ENCODE measurements at regions of chr18 and their contacts with region 1.

Region 1: DNA sequence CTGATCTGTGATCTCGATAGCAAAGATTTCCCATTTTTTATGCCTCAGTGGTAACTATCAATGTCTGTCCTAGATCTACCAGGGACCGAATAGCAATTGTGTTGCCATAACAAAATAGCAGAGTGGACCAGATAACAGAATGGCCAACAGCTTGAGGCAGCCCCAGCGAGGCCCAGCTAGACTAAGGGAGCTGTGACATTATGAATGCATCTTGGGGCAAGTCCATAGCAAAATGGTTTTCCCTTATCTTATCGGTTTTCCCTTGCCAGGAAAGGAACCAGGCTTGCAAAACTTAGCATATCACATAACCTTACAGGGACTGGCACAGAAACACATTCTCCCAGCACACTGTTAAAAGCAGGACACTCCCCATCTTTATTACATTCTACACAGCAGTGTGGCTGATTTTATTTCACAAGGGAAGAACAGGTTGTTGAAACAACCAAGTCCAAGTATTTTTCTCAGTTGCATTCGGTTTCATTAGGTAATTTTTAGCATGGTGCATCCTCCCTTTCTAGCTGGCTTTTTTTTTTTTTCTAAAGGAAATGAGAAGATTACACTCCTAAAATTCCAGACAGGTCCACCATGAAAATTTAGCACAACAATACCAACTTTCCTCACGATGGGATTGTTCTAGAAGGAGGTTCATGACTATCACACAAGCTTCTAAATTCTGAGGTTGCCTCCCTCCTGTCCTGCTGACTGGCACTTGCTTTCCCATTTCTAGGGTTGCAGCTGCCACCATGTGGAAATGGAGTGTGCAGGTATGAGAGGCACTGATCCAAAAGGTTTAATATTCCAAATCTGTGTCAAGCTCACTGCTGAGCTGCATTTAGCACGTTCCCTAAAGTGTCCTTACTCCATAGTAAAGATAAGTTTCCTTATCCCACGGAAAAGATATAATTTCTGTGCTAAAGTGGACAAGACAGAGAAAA is 97.0 kb upstream of the SLC35G4 start:
- DNase-seq: peak; percentile 51
- H3K4me3 ChIP-seq: no peak overlapping the region
- H3K27ac ChIP-seq: no peak overlapping the region
- H3K4me1 ChIP-seq: no peaks in the 10 kb centered on the region
- H3K27me3 ChIP-seq: no peaks in the 10 kb centered on the region
- CTCF ChIP-seq: peak; percentile 76 to 81

Region 2: GRCh38 chr18:11324956-11325873 is 187.1 kb before region 1 on chr18:
- CTCF ChIA-PET with region 1: no interaction called
- dilution Hi-C with region 1: no loop called
- in situ Hi-C with region 1: loop called in 1 of 2 experiments (anchors 10 kb)
- intact Hi-C with region 1: loop called (anchors 5 kb)
- DNase-seq: peak; percentile 43
- H3K4me3 ChIP-seq: no peak overlapping the region
- H3K27ac ChIP-seq: peak overlapping the region; percentile 29
- H3K4me1 ChIP-seq: peaks cover 14% of the 10 kb centered on the region
- H3K27me3 ChIP-seq: no peaks in the 10 kb centered on the region
- CTCF ChIP-seq: no peak

Measured in mammary epithelial cell (primary cell).